ENCODE measurements at regions of chr10 and their contacts with region 1.

Region 1: GRCh38 chr10:110883924-110884323 is 12.2 kb downstream of the PDCD4 start:
- DNase-seq: no peak
- ATAC-seq: no peak

Region 2: GRCh38 chr10:110739811-110740271 is 144.1 kb before region 1 on chr10:
- intact Hi-C with region 1: loop called (anchors 5 kb)
- DNase-seq: no peak
- ATAC-seq: no peak

Region 3: DNA sequence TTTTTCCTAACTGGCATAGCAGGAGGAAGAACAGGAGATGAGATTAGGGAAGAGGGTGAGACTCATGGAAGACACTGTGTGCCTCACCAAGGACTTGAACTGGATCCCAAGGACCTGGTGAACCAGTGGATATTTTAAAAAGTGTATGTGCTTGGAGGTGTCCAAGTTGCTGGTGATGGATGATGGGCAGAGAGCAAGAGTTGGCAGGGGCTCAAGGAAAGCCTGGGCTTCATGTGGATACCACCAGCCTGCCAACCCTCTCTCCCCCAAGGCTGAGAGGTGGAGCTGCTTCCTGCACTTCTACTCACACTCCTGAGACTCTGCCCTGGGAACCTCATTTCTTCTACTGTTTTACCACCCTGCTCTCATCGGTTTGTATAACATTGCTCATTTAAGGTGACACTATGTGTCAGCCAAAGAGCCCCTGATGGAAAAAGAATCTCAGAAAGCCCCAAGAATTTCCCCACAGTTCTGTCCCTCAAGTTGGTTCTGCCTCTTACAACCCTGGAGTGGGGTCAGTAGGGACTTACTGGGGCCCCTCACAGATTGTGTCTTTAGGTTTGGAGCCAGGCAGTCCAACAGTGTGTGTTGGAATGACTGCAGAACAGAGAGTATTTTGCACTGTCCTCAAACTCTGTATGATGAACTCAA is 68.4 kb before region 1 on chr10:
- intact Hi-C with region 1: loop called (anchors 5 kb)
- DNase-seq: peak; percentile 67
- ATAC-seq: peak; percentile 53